Aorta (tissue), 5 donors: ENCODE measurements at regions of chr19 and their contacts with region 1.

Region 1: DNA sequence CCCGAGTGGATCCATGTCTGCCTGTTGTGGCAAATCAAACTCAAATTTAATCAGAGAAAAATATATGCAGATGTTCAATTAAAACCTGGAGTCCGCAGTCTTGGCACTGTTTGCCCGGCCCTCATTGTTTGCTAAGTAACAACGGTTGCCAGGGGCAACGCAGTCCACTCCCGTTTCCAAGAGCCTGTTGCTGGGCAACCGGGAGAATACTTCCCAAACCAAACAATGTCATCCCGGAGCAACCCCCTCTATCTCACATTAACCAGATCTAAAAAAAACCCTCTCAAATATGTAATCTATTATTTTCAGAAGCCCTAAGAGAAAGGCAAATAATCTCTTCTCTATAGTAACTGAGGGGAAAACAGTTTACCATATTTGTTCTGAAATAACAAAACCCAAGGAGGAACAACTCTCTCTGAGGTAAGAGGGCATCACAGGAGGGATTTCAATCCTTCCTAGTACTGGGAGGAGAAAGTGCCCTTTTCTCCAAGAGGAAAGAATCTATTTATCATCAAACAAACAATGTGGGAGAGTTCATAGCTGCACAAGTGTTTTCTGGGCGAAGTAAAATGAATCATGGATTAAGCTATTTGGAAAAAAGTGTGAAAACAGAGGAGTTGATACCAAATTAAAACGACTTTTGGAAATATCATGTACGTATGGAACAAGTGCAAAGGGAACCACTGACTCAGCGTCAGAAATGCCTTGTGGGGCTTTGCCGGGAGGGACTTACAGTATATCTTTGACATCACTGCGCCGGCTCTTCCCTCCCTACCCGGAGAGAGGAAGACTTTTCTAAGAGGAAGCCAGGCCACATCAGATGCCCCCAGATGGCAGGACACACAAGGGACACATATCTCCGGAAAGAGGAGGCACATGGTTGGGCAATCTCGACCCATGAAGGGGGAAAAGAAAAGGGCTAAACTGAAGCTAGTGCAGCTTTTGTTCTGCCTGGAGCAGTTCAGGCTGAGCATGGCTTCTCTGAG is 43.3 kb downstream of the RFX2 start:
- DNase-seq: peak; percentile 97
- ATAC-seq: peak; percentile 89
- H3K4me3 ChIP-seq: no peak overlapping the region
- H3K27ac ChIP-seq: peak overlapping the region; percentile 95 to 100
- H3K4me1 ChIP-seq: peaks cover 3 to 11% of the 10 kb centered on the region in 2 donors
- H3K27me3 ChIP-seq: no peaks in the 10 kb centered on the region

Region 2: GRCh38 chr19:6092329-6093286 is 25.7 kb after region 1 on chr19:
- intact Hi-C with region 1: loop called in 1 of 2 experiments (anchors 1 kb)
- DNase-seq: peak; percentile 92 to 95
- ATAC-seq: peak; percentile 92
- H3K4me3 ChIP-seq: no peak overlapping the region
- H3K27ac ChIP-seq: peak overlapping the region; percentile 86 to 91
- H3K4me1 ChIP-seq: no peaks in the 10 kb centered on the region
- H3K27me3 ChIP-seq: no peaks in the 10 kb centered on the region

Region 3: DNA sequence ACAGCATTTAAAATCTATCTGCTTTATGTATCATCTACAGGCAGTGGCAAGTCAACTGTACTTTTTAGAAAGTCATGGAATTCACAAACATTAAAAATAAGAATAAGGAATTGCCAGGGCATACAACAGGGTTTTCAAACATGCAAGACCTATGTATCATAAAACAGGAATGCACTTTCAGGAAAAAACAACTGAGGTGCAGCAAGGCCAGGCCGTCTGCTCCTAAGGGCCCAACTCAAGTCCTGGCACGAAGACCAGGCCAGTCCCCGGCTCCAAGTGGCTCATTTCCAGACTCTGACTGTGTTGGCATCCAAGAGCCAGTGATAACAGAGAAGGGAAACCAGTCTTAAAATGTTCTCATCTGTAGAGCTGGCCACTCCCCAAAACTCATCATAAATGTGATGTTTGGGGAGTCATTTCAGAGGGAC is 36.3 kb after region 1 on chr19:
- intact Hi-C with region 1: loop called (anchors 2 kb)
- DNase-seq: peak; percentile 90 to 92
- ATAC-seq: peak; percentile 84
- H3K4me3 ChIP-seq: no peak overlapping the region
- H3K27ac ChIP-seq: peak overlapping the region in 1 of 2 donors; percentile 78
- H3K4me1 ChIP-seq: peaks cover 6 to 7% of the 10 kb centered on the region in 2 donors
- H3K27me3 ChIP-seq: no peaks in the 10 kb centered on the region

Region 4: GRCh38 chr19:6110360-6110977 is 43.5 kb after region 1 on chr19 and contains the start of gene RFX2:
- intact Hi-C with region 1: loop called in 1 of 2 experiments (anchors 2 kb)
- DNase-seq: peak; percentile 99
- ATAC-seq: peak; percentile 97
- H3K4me3 ChIP-seq: peak within 1 kb of the TSS; percentile 6 to 79
- H3K27ac ChIP-seq: peak within 1 kb of the TSS; percentile 95 to 99
- H3K4me1 ChIP-seq: no peaks in the 10 kb centered on the region
- H3K27me3 ChIP-seq: no peaks in the 10 kb centered on the region
- total RNA-seq, gene RFX2: 16.6 to 26.1 TPM